AG04449 (cell line): ENCODE measurements at regions of chr1 and their contacts with region 1.

Region 1: DNA sequence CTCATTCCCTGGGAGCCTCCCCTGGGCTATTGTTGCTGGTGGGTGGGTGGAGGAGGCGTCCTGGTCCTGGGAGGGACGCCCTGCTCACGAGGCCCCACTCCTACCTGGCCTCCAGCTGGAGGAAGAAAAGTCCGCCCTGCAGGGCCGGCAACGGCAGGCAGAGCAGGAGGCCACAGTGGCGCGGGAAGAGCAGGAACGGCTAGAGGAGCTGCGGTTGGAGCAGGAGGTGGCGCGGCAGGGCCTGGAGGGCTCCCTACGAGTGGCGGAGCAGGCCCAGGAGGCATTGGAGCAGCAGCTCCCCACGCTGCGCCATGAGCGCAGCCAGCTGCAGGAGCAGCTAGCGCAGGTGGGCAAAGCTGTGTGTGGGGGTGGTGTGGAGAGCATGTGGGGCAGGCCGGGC is 24.9 kb downstream of the CROCC start:
- DNase-seq: no peak
- H3K4me3 ChIP-seq: no peak overlapping the region
- CTCF ChIP-seq: no peak

Region 2: GRCh38 chr1:16625497-16626408 is 320.9 kb before region 1 on chr1:
- CTCF ChIA-PET with region 1: interaction called, 19 read pairs
- POLR2A ChIA-PET with region 1: no interaction called
- DNase-seq: no peak
- H3K4me3 ChIP-seq: no peak overlapping the region
- CTCF ChIP-seq: no peak

Region 3: GRCh38 chr1:16967095-16967575 is 20.5 kb after region 1 on chr1:
- CTCF ChIA-PET with region 1: interaction called, 78 read pairs
- POLR2A ChIA-PET with region 1: interaction called, 4 read pairs
- DNase-seq: no peak
- H3K4me3 ChIP-seq: no peak overlapping the region
- CTCF ChIP-seq: no peak

Region 4: DNA sequence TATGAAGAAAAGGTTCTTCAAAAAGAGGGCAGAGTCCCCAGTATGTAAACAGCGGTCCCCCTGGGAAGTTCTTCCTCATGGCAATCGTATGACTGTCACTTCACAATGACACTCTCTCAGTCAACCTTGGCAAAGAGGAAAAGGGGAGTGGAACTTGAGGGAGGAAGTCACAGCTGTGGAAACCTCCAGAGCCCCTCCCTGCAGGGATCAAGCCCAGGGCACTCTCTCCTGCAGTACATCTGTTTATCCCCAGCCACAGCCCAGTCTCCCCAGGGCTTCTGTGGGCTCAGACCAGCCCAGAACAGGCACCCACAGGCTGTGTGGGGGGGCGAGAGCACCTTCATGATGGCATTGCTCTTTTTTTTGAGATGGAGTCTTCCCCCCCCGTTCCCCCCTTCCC is 63.1 kb after region 1 on chr1:
- CTCF ChIA-PET with region 1: interaction called, 10 read pairs
- POLR2A ChIA-PET with region 1: no interaction called
- DNase-seq: no peak
- H3K4me3 ChIP-seq: no peak overlapping the region
- CTCF ChIP-seq: no peak

Region 5: DNA sequence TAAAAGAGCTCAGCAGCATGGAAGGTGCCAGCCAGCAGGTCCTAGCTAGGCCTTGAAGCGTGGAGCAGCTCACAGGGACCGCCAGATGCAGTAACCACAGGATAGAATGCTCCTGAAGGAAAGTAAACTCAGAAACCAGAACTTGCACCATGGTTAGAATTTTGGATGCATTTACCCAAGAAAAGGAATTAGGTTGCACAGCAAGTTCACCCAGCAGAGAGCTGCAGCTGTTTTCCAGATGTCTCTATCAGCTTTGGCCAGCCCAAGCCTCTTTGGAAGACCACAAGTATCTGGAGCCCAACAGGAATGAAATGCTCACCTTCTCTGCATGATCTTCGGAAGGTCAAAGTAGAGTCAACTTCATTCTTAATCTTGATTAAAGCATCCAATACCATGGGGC is 86.1 kb after region 1 on chr1:
- CTCF ChIA-PET with region 1: interaction called, 14 read pairs
- POLR2A ChIA-PET with region 1: no interaction called
- DNase-seq: no peak
- H3K4me3 ChIP-seq: no peak overlapping the region
- CTCF ChIP-seq: no peak